Panc1 (cell line): ENCODE measurements at regions of chr20 and their contacts with region 1.

Region 1: GRCh38 chr20:36833275-36834020 is 42.5 kb upstream of the TLDC2 start:
- DNase-seq: no peak
- ATAC-seq: no peak
- H3K4me3 ChIP-seq: no peak overlapping the region
- H3K27ac ChIP-seq: no peak overlapping the region
- H3K4me1 ChIP-seq: peaks cover 19% of the 10 kb centered on the region
- H3K27me3 ChIP-seq: no peaks in the 10 kb centered on the region
- CTCF ChIP-seq: no peak

Region 2: GRCh38 chr20:36344517-36345136 is 488.8 kb before region 1 on chr20:
- CTCF ChIA-PET with region 1: no interaction called
- POLR2A ChIA-PET with region 1: no interaction called
- in situ Hi-C with region 1: no loop called
- intact Hi-C with region 1: no loop called
- DNase-seq: no peak
- ATAC-seq: no peak; the same call in 1 of the 2 replicates
- H3K4me3 ChIP-seq: no peak overlapping the region
- H3K27ac ChIP-seq: no peak overlapping the region
- H3K4me1 ChIP-seq: no peaks in the 10 kb centered on the region; the same call in 1 of the 2 replicates
- H3K27me3 ChIP-seq: no peaks in the 10 kb centered on the region
- CTCF ChIP-seq: no peak

Region 3: GRCh38 chr20:36848078-36848660 is 14.7 kb after region 1 on chr20:
- CTCF ChIA-PET with region 1: interaction called, 11 read pairs
- POLR2A ChIA-PET with region 1: interaction called, 6 read pairs
- in situ Hi-C with region 1: no loop called
- intact Hi-C with region 1: no loop called
- DNase-seq: no peak
- ATAC-seq: no peak
- H3K4me3 ChIP-seq: no peak overlapping the region
- H3K27ac ChIP-seq: no peak overlapping the region
- H3K4me1 ChIP-seq: no peaks in the 10 kb centered on the region; the same call in 1 of the 2 replicates
- H3K27me3 ChIP-seq: no peaks in the 10 kb centered on the region
- CTCF ChIP-seq: no peak